ENCODE measurements at regions of chr6 and their contacts with region 1.

Region 1: DNA sequence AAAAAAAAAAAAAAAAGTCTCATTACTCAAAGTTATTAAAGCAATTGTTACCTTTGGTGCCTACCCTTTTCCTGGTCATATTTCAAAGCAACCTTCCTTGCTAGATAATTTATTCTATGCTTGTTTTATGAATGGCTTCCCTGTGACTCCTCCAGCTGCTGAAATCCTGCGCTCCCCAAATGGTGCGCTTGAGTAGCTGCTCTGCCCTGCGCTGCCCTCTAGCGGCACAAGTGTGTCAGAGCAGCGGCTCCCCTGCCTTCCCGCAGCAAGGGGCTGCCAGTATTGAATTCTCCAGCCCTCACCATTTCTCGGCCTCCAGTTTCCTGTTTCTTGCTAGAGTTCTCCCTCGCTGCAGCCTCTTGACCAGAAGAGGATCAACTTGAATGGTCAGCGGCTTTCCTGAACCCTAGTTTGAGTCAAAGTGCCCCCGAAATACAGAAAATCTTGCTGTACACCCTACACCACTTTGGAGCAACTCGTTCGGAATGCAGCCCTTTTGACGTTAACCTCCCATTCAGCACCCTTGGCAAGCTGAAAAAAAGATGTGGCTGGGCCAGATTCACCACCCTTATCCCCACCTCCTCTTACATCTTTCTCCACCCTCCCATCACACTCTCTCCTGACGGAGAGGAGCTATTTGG is 60.4 kb upstream of the KLHL31 start:
- DNase-seq: peak; percentile 71
- H3K4me3 ChIP-seq: no peak overlapping the region
- H3K27ac ChIP-seq: no peak overlapping the region
- H3K4me1 ChIP-seq: no peaks in the 10 kb centered on the region
- H3K27me3 ChIP-seq: no peaks in the 10 kb centered on the region
- CTCF ChIP-seq: peak; percentile 86 to 90 (median 89)
- POLR2A ChIP-seq: no peak

Region 2: DNA sequence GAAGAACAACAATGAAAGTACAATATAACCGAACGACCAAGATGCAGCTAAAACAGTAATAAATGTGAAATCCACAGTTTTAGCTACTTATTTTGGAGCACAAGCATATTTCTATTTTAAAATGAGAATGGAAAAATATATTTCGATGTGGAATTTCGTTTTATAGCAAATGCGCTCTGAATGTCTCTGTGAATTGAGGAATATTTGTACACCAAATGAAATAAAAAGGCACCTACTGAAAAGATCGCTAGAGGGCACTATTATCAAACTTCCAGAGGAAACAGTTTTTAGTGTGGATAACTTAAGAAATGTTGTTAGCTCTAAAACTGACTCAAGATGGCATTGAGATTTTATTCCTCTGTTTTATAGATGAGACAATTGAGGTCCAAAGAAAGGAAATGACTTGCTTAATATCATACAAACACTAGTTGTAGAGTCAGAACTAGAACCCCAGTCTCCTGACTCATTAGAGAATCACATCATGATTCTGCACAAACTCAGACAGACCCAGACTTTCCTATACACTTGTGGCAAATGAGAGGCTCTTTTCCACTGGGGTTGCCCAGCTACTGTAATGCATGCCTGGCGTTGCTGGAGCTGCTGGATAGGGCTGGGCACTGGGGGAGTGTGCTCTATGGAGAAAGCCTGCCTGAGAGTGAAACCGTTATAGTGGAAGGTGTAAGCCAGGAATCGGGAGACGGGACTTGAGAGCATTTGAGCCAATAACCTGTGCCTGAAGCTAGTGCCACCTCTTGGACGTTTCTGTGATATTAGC is 232.9 kb before region 1 on chr6:
- intact Hi-C with region 1: loop called (anchors 5 kb)
- DNase-seq: peak; percentile 29
- H3K4me3 ChIP-seq: no peak overlapping the region
- H3K27ac ChIP-seq: no peak overlapping the region
- H3K4me1 ChIP-seq: no peaks in the 10 kb centered on the region
- H3K27me3 ChIP-seq: no peaks in the 10 kb centered on the region
- CTCF ChIP-seq: peak; percentile 29 to 80 (median 76)
- POLR2A ChIP-seq: no peak

Measured in prostate gland (tissue), 2 donors.